Sciatic nerve (tissue), 2 donors: ENCODE measurements at regions of chr11 and their contacts with region 1.

Region 1: GRCh38 chr11:123511037-123511870 is 81.2 kb downstream of the GRAMD1B start:
- DNase-seq: peak; percentile 87
- ATAC-seq: peak; percentile 95

Region 2: DNA sequence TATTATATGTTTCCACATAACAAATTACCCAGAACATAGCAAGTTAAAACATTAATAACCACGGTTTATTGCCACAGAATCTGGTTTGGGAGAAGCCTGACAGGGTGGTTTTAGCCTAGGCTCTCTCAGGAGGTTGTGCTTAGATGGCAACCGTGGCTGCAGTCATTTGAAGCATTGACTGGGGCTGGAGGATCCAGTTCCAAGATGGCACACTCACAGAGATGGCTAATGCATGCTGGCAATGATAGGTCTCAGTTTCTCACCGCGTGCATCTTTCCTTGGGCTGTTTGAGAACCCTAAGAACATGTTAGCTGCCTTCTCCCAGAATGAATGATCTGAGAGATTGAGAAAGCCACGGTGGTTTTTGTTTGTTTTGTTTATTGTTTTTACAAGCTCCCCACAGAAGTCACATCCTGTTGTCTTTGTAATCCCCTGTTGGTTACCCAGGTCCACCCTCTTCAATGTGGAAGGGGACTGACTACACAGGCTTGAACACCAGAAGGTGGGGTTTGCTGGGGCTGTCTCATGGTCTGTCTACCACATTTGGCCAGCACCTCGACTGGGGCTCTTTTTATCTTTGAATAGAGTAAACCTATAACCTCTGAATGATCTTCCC is 117.8 kb before region 1 on chr11:
- intact Hi-C with region 1: no loop called
- DNase-seq: no peak
- ATAC-seq: no peak

Region 3: DNA sequence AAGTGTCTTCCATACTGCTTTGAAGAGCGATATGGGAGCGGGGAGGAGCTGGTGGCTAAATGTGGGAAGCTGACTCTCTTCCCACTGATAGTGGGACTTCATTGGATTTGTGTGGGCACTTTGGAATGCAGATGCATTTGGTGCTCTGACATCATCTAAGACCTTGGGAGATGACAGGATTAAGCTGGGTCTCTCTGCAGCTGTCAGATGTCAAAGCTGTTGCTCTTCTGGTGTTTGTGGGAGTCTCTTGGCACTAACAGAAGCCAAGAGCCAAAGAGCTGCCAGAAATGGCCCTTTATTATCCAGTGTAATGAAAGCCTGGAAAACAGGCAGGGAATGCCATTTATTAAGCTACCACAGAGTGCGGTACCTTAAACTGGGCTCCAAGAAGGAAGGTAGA is 60.6 kb before region 1 on chr11:
- intact Hi-C with region 1: no loop called
- DNase-seq: no peak
- ATAC-seq: no peak

Region 4: DNA sequence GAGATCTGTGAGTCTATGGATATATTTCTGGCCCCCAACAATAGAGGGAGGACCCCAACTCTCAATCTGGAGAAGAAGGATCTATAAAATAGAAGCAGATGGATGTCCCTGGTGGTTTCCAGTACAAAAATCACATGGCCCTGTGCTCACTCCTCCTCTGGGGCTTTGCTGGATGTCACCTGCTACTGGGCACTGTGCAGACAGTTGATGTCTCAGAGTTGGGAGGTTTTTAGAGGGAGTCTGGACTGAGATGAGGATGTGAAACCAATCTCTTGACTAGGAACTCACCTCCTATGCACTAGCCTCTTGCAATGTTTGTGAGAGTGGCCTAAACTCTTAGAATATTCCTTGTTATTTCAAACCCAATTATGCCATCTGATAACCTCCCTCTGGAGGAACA is 35.9 kb after region 1 on chr11:
- intact Hi-C with region 1: loop called (anchors 5 kb)
- DNase-seq: no peak
- ATAC-seq: no peak

Region 5: DNA sequence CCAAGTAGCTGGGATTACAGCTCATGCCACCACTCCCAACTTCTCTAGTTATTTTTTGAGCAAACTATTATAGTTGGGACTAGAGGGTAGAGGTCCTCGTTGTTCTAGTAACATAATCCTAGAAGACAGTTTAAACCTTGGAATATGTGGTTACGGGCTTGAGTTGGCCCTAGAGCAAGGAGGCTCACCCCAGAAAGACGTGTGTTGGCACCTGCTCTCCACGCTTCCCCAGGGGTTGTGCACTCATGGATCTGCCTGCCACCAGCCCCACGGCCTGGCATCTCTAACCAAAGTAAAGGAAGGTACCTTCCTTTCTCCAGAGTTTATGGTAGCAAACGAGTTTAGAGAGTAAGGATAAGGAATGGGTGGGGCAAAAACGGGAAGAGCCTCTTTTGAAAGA is 64.2 kb after region 1 on chr11:
- intact Hi-C with region 1: loop called (anchors 2 kb)
- DNase-seq: no peak
- ATAC-seq: no peak